A549 (cell line): ENCODE measurements at regions of chr5 and their contacts with region 1.

Region 1: GRCh38 chr5:132495667-132496190 is 5.2 kb upstream of the IRF1 start:
- DNase-seq: peak; percentile 82 to 83
- ATAC-seq: peak; percentile 56 to 74
- H3K4me3 ChIP-seq: peak overlapping the region; percentile 56
- H3K27ac ChIP-seq: peak overlapping the region; percentile 88 to 97
- H3K4me1 ChIP-seq: peaks cover 52% of the 10 kb centered on the region
- CTCF ChIP-seq: no peak
- EP300 ChIP-seq: 0 out of 5 replicates have a peak, but pooled peaks of 1 of the 2 experiments have one; percentile 15
- POLR2A ChIP-seq: peak; percentile 24
- RAD21 ChIP-seq: no peak

Region 2: DNA sequence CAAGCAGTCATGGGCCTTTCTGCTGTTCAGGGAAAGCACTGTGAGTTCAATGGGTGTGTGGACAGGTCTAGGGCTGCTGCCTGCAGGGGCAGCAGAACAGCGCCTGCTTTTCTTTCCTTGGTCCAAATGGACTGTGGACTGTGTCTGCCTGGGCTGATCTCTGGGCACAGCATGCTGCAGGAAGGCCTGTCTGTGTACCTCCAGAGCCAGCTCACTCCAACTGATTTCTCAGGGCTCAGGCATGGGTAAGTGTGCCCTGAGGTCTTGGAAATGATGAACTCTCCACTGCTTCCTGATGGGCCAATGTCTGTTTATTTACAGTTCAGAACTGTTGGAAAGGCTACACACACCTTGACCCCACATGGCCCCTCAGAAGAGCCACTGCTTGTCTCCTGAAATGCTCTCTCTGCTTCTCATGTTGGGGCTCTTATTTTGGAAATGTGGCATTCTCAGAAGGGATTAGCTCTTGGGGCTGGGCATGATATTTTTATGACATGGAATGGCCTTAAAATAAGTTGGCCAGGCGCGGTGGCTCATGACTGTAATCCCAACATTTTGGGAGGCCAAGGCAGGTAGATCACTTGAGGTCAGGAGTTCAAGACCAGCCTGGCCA is 174.5 kb before region 1 on chr5:
- CTCF ChIA-PET with region 1: no interaction called
- POLR2A ChIA-PET with region 1: no interaction called
- DNase-seq: no peak
- ATAC-seq: peak in 1 of 2 experiments; percentile 63; a peak in 3 of 6 replicates
- H3K4me3 ChIP-seq: no peak overlapping the region
- H3K27ac ChIP-seq: no peak overlapping the region
- H3K4me1 ChIP-seq: peaks cover 6% of the 10 kb centered on the region; the same call in 1 of the 3 replicates
- CTCF ChIP-seq: no peak
- EP300 ChIP-seq: no peak
- POLR2A ChIP-seq: no peak
- RAD21 ChIP-seq: no peak

Region 3: GRCh38 chr5:132369474-132370180 is 126.1 kb before region 1 on chr5 and contains the start of gene SLC22A5:
- CTCF ChIA-PET with region 1: interaction called, 9 read pairs
- POLR2A ChIA-PET with region 1: interaction called, 14 read pairs
- DNase-seq: peak; percentile 62 to 84
- ATAC-seq: peak; percentile 82 to 85
- H3K4me3 ChIP-seq: peak within 1 kb of the TSS; percentile 87
- H3K27ac ChIP-seq: peak within 1 kb of the TSS; percentile 92 to 93
- H3K4me1 ChIP-seq: peaks cover 68% of the 10 kb centered on the region
- CTCF ChIP-seq: no peak
- EP300 ChIP-seq: no peak
- POLR2A ChIP-seq: peak; percentile 65
- RAD21 ChIP-seq: no peak; a peak in 1 of 5 replicates
- polyA plus RNA-seq, gene SLC22A5: 35.3 and 44.8 TPM in 2 replicates

Region 4: GRCh38 chr5:132410451-132411381 is 85.0 kb before region 1 on chr5:
- CTCF ChIA-PET with region 1: interaction called, 41 read pairs
- POLR2A ChIA-PET with region 1: interaction called, 20 read pairs
- DNase-seq: peak; percentile 79 to 87
- ATAC-seq: peak; percentile 94 to 95
- H3K4me3 ChIP-seq: peak overlapping the region; percentile 69
- H3K27ac ChIP-seq: peak overlapping the region; percentile 96 to 98
- H3K4me1 ChIP-seq: peaks cover 33% of the 10 kb centered on the region
- CTCF ChIP-seq: peak; percentile 74
- EP300 ChIP-seq: no peak
- POLR2A ChIP-seq: peak; percentile 73
- RAD21 ChIP-seq: peak; percentile 52 to 78

Region 5: GRCh38 chr5:132426525-132427138 is 69.1 kb before region 1 on chr5:
- CTCF ChIA-PET with region 1: interaction called, 91 read pairs
- POLR2A ChIA-PET with region 1: interaction called, 28 read pairs
- DNase-seq: peak; percentile 46 to 65
- ATAC-seq: peak; percentile 66 to 80
- H3K4me3 ChIP-seq: no peak overlapping the region
- H3K27ac ChIP-seq: peak overlapping the region; percentile 67 to 84
- H3K4me1 ChIP-seq: peaks cover 60% of the 10 kb centered on the region
- CTCF ChIP-seq: peak; percentile 20; the same call in 2 of the 3 replicates
- EP300 ChIP-seq: no peak
- POLR2A ChIP-seq: no peak
- RAD21 ChIP-seq: peak in 1 of 2 experiments; percentile 17; a peak in 1 of 5 replicates

Region 6: GRCh38 chr5:132506094-132506692 is 10.5 kb after region 1 on chr5:
- CTCF ChIA-PET with region 1: interaction called, 30 read pairs
- POLR2A ChIA-PET with region 1: interaction called, 9 read pairs
- DNase-seq: peak; percentile 63 to 64
- ATAC-seq: peak; percentile 87 to 91
- H3K4me3 ChIP-seq: no peak overlapping the region
- H3K27ac ChIP-seq: 0 out of 6 replicates have a peak overlapping the region, but pooled peaks of 1 of the 2 experiments have one; percentile 15
- H3K4me1 ChIP-seq: peaks cover 9% of the 10 kb centered on the region
- CTCF ChIP-seq: peak; percentile 48
- EP300 ChIP-seq: no peak
- POLR2A ChIP-seq: no peak
- RAD21 ChIP-seq: peak in 1 of 2 experiments; percentile 51; a peak in 2 of 5 replicates

Region 7: GRCh38 chr5:132556763-132557477 is 61.2 kb after region 1 on chr5 and contains the start of gene RAD50:
- CTCF ChIA-PET with region 1: interaction called, 3 read pairs
- POLR2A ChIA-PET with region 1: interaction called, 10 read pairs
- DNase-seq: peak; percentile 94 to 97
- ATAC-seq: peak; percentile 99
- H3K4me3 ChIP-seq: peak within 1 kb of the TSS; percentile 61
- H3K27ac ChIP-seq: peak within 1 kb of the TSS; percentile 86 to 98
- H3K4me1 ChIP-seq: peaks cover 20% of the 10 kb centered on the region; the same call in 2 of the 3 replicates
- CTCF ChIP-seq: no peak
- EP300 ChIP-seq: no peak
- POLR2A ChIP-seq: peak; percentile 88
- RAD21 ChIP-seq: no peak
- polyA plus RNA-seq, gene RAD50: 51.6 and 81.5 TPM in 2 replicates